Heart right ventricle (tissue), 16 donors: ENCODE measurements at regions of chr5 and their contacts with region 1.

Region 1: GRCh38 chr5:52799983-52800393 is 12.3 kb downstream of the ITGA1 start:
- DNase-seq: peak; percentile 94 to 98
- ATAC-seq: peak; percentile 92 to 98 (median 94)
- H3K4me3 ChIP-seq: peak overlapping the region; percentile 56 to 80 (median 68)
- H3K27ac ChIP-seq: peak overlapping the region; percentile 77 to 97 (median 94)
- H3K4me1 ChIP-seq: peaks cover 0 to 94% (median 71%) of the 10 kb centered on the region in 9 donors
- H3K27me3 ChIP-seq: no peaks in the 10 kb centered on the region
- CTCF ChIP-seq: no peak

Region 2: DNA sequence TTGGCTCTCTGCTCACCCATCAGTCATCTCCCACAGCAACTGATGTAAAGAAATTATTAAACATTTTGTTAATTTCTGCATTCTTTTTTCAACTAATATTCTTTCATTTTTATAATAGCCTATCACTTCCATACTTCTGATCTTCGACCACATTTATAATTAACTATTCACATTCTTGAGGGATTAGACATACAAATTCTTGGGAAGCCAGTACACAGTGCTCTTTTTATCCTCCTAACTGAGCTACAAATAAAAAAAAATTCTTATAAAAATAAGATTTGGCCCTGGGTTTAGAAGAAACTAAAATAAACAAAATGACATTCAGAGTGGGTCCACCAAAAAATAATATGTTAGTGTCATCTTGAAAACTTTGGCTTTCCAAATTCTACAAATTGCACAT is 115.9 kb before region 1 on chr5:
- intact Hi-C with region 1: no loop called
- DNase-seq: no peak
- ATAC-seq: no peak
- H3K4me3 ChIP-seq: no peak overlapping the region
- H3K27ac ChIP-seq: no peak overlapping the region
- H3K4me1 ChIP-seq: no peaks in the 10 kb centered on the region
- H3K27me3 ChIP-seq: no peaks in the 10 kb centered on the region
- CTCF ChIP-seq: no peak

Region 3: GRCh38 chr5:52840277-52841050 is 40.5 kb after region 1 on chr5:
- intact Hi-C with region 1: loop called in 1 of 10 experiments (anchors 2 kb)
- DNase-seq: peak in 1 of 2 donors; percentile 38
- ATAC-seq: peak in 6 of 8 donors; percentile 48 to 78 (median 70)
- H3K4me3 ChIP-seq: peak overlapping the region in 2 of 10 donors; percentile 3 to 18
- H3K27ac ChIP-seq: peak overlapping the region in 9 of 10 donors; percentile 18 to 70 (median 38)
- H3K4me1 ChIP-seq: peaks cover 0 to 74% (median 18%) of the 10 kb centered on the region in 9 donors
- H3K27me3 ChIP-seq: no peaks in the 10 kb centered on the region
- CTCF ChIP-seq: no peak

Region 4: GRCh38 chr5:52893105-52893504 is 93.1 kb after region 1 on chr5:
- intact Hi-C with region 1: loop called in 3 of 10 experiments (anchors 10 kb)
- DNase-seq: no peak
- ATAC-seq: peak in 6 of 8 donors; percentile 22 to 70 (median 49)
- H3K4me3 ChIP-seq: no peak overlapping the region
- H3K27ac ChIP-seq: peak overlapping the region in 2 of 10 donors; percentile 8 to 65
- H3K4me1 ChIP-seq: peaks cover 10 to 54% (median 34%) of the 10 kb centered on the region in 9 donors
- H3K27me3 ChIP-seq: no peaks in the 10 kb centered on the region
- CTCF ChIP-seq: no peak

Region 5: DNA sequence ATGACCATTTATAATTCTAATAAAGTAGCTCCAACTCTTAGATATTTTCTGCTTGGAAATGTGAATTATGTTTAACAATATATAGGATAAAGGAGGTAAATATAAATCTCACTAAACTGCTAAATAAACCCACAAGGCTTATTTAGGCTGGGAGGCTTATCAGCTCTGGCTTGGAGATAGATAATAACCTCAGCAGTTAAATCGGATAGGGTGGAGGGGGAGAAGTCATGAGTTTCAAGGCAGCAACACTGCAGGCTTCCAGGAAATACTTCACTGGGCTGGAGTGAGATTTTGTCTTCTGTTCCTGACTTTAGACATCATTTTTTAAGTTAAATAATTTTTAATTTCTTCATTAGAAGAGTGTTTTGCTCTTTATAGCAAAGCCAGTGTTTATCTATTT is 109.2 kb after region 1 on chr5:
- intact Hi-C with region 1: loop called in 2 of 10 experiments (anchors 5 to 10 kb)
- DNase-seq: peak in 1 of 2 donors; percentile 12
- ATAC-seq: peak in 5 of 8 donors; percentile 61 to 90 (median 72)
- H3K4me3 ChIP-seq: no peak overlapping the region
- H3K27ac ChIP-seq: peak overlapping the region in 6 of 10 donors; percentile 2 to 66 (median 44)
- H3K4me1 ChIP-seq: peaks cover 0 to 32% (median 17%) of the 10 kb centered on the region in 9 donors
- H3K27me3 ChIP-seq: no peaks in the 10 kb centered on the region
- CTCF ChIP-seq: no peak

Region 6: GRCh38 chr5:52915176-52915875 is 115.3 kb after region 1 on chr5:
- intact Hi-C with region 1: loop called in 1 of 10 experiments (anchors 10 kb)
- DNase-seq: peak; percentile 8 to 70
- ATAC-seq: peak; percentile 76 to 95 (median 92)
- H3K4me3 ChIP-seq: peak overlapping the region in 6 of 10 donors; percentile 2 to 39 (median 24)
- H3K27ac ChIP-seq: peak overlapping the region in 6 of 10 donors; percentile 1 to 58 (median 28)
- H3K4me1 ChIP-seq: peaks cover 0 to 23% (median 7%) of the 10 kb centered on the region in 9 donors
- H3K27me3 ChIP-seq: no peaks in the 10 kb centered on the region
- CTCF ChIP-seq: peak; percentile 70 to 88 (median 80)

Region 7: GRCh38 chr5:53109443-53110127 is 309.6 kb after region 1 on chr5 and contains the start of gene MOCS2:
- intact Hi-C with region 1: loop called in 1 of 10 experiments (anchors 10 kb)
- DNase-seq: peak; percentile 90 to 95
- ATAC-seq: peak; percentile 99 to 100 (median 100)
- H3K4me3 ChIP-seq: peak within 1 kb of the TSS; percentile 40 to 85 (median 76)
- H3K27ac ChIP-seq: peak within 1 kb of the TSS; percentile 49 to 86 (median 82)
- H3K4me1 ChIP-seq: peaks cover 0 to 30% (median 20%) of the 10 kb centered on the region in 9 donors
- H3K27me3 ChIP-seq: no peaks in the 10 kb centered on the region
- CTCF ChIP-seq: no peak
- total RNA-seq, gene MOCS2: 68.3 to 113 (median 80.3) TPM